CD14-positive monocyte (primary cell): ENCODE measurements at regions of chr11 and their contacts with region 1.

Region 1: GRCh38 chr11:59207988-59208451 is 4.7 kb downstream of the MPEG1 start:
- DNase-seq: peak in 2 of 3 donors; percentile 51 to 64
- H3K4me3 ChIP-seq: peak overlapping the region; percentile 70 to 99 (median 98)
- H3K4me3 Mint-ChIP-seq: peak overlapping the region; percentile 98 to 99
- H3K27ac ChIP-seq: peak overlapping the region; percentile 2 to 93
- H3K27ac Mint-ChIP-seq: peak overlapping the region; percentile 86 to 98 (median 97)
- H3K4me1 ChIP-seq: peaks cover 37 to 70% of the 10 kb centered on the region in 2 donors
- H3K4me1 Mint-ChIP-seq: peaks cover 51% of the 10 kb centered on the region
- H3K27me3 ChIP-seq: no peaks in the 10 kb centered on the region
- H3K27me3 Mint-ChIP-seq: no peaks in the 10 kb centered on the region
- CTCF ChIP-seq: peak; percentile 80

Region 2: DNA sequence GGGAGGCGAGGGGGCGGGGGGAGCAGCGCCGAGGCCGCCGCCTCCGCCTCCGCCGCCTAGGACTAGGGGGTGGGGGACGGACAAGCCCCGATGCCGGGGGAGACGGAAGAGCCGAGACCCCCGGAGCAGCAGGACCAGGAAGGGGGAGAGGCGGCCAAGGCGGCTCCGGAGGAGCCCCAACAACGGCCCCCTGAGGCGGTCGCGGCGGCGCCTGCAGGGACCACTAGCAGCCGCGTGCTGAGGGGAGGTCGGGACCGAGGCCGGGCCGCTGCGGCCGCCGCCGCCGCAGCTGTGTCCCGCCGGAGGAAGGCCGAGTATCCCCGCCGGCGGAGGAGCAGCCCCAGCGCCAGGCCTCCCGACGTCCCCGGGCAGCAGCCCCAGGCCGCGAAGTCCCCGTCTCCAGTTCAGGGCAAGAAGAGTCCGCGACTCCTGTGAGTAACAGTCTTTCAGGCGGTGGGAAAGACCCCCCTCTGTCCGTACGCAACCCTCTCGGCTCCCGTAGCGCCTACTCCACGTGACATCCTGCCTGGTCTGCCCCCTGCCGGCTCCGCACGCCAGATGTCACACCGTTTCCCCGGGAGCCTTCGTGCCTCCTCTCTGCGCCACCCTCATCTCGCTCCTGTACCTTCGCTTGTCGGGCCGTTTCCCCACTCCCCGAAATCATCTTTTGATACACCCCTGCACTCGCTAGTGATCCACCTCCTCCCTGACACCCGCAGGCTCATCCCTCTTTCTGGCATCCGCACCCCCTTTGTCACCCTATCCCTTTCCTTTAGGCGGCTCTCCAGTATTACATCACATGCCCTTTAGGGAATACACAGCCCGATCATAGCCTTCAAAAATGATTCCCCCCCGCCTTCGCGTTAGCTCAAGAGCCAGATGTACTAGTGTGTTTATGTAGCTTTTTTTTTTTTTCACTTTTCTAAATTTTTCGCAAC is 628.6 kb before region 1 on chr11:
- intact Hi-C with region 1: loop called in 1 of 2 experiments (anchors 5 kb)
- DNase-seq: peak; percentile 87 to 98 (median 91)
- H3K4me3 ChIP-seq: peak overlapping the region; percentile 68 to 89 (median 75)
- H3K4me3 Mint-ChIP-seq: peak overlapping the region; percentile 98 to 100
- H3K27ac ChIP-seq: peak overlapping the region; percentile 97 to 100
- H3K27ac Mint-ChIP-seq: peak overlapping the region; percentile 100
- H3K4me1 ChIP-seq: peaks cover 54 to 68% of the 10 kb centered on the region in 2 donors
- H3K4me1 Mint-ChIP-seq: peaks cover 62% of the 10 kb centered on the region
- H3K27me3 ChIP-seq: no peaks in the 10 kb centered on the region
- H3K27me3 Mint-ChIP-seq: peaks cover 0 to 2% (median 0%) of the 10 kb centered on the region in 3 donors
- CTCF ChIP-seq: peak; percentile 90

Region 3: DNA sequence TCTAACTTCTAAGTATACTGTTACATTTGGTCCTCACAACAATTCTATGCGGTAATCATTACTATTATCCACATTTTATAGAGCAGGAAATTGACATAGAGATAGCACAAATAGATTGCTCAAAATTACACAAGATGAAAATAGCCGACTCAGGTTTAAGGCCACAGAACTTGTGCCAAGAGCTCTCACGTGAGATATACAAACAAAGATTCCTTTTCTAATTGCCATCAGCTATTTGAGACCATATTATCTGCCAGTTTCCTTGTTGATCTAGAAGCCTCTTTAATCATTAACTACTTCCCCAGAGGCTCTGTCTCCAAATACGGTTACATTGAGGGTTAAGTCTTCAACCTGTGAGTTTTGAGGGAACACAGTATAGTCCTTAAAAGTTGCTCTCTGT is 182.9 kb before region 1 on chr11:
- intact Hi-C with region 1: no loop called
- DNase-seq: no peak
- H3K4me3 ChIP-seq: no peak overlapping the region
- H3K4me3 Mint-ChIP-seq: no peak overlapping the region
- H3K27ac ChIP-seq: no peak overlapping the region
- H3K27ac Mint-ChIP-seq: no peak overlapping the region
- H3K4me1 ChIP-seq: peaks cover 0 to 4% of the 10 kb centered on the region in 2 donors
- H3K4me1 Mint-ChIP-seq: peaks cover 4% of the 10 kb centered on the region
- H3K27me3 ChIP-seq: no peaks in the 10 kb centered on the region
- H3K27me3 Mint-ChIP-seq: peaks cover 0 to 3% (median 0%) of the 10 kb centered on the region in 3 donors
- CTCF ChIP-seq: no peak

Region 4: DNA sequence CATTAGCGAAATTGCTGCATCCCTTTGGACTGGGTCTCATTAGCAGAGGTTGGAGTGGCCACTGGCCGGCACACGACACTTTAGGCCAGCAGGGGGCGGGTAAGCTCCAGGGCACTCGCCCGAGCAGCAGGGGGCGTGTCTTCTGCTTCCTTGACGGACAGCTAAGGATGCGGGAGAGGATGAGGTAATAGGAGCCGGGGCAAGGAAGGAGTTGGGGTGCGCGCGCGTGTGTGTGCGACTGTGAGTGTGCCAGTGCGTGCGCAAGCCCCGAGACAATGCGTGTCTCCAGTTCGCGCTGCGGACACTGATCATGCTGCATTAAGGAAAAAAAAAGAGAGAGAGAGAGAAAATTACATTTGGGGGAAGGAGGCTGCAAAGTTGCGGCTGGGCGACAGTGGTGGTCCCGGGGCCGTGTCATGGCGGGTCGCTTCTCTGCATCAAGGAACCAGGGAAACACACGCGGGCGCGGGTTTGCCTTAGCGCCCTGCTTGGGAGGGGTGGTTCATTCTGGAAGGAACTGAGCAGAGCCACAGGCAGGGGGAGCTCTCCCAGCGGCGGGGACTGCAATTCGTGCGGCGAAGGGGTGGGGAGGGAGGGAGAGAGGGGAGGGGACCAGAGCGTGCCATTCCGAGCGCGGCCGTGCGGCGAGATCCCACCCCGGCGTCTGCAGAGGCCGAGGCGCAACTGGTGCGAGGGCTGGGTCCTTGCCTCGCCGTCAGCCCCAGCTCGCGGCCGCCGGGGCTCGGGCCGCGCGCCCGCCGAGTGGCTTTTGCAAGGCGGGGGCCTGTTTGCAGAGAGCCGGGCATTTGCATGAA is 36.3 kb before region 1 on chr11 and contains the start of gene DTX4:
- intact Hi-C with region 1: loop called (anchors 2 to 5 kb)
- DNase-seq: peak; percentile 87 to 96 (median 90)
- H3K4me3 ChIP-seq: peak within 1 kb of the TSS; percentile 65 to 82 (median 67)
- H3K4me3 Mint-ChIP-seq: peak within 1 kb of the TSS; percentile 90 to 97
- H3K27ac ChIP-seq: peak within 1 kb of the TSS; percentile 31 to 71
- H3K27ac Mint-ChIP-seq: peak within 1 kb of the TSS in 3 of 7 donors; percentile 21 to 66 (median 27)
- H3K4me1 ChIP-seq: peaks cover 14 to 17% of the 10 kb centered on the region in 2 donors
- H3K4me1 Mint-ChIP-seq: peaks cover 20% of the 10 kb centered on the region
- H3K27me3 ChIP-seq: peaks cover 0 to 9% of the 10 kb centered on the region in 2 donors
- H3K27me3 Mint-ChIP-seq: peaks cover 15 to 22% (median 20%) of the 10 kb centered on the region in 3 donors
- CTCF ChIP-seq: peak; percentile 92
- polyA plus RNA-seq, gene DTX4: 0.96 to 1.9 (median 1.1) TPM

Region 5: DNA sequence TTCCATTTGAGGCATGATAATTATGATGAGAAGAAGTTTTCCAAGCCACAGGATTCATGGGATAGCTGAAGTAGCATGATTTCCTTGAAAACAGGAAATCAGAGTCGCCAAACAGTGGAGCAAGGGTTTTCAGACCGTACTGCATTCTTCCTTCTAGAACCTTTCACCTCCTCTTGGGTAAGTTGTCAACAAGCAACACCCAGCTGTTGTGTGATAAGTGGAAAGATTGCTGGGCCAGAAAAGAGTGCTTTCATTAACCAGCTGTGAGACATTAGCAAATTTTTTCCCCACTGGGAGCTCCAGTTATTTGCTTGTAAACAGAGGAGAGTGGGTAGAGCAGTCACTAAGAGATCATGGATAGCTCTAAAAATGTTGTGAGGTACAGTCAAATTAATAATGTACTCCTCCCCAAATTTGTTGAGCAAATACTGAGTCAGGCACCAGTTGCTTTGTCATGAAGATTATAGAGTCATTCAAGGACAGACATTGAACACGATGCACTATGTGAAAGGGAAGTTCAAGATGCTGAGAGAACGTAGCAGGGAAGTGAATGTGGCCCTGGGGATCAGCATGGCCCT is 16.4 kb after region 1 on chr11:
- intact Hi-C with region 1: loop called in 1 of 2 experiments (anchors 2 kb)
- DNase-seq: peak; percentile 88 to 92 (median 92)
- H3K4me3 ChIP-seq: peak overlapping the region in 2 of 3 experiments; percentile 45 to 61
- H3K4me3 Mint-ChIP-seq: peak overlapping the region; percentile 74 to 76
- H3K27ac ChIP-seq: peak overlapping the region; percentile 93 to 98
- H3K27ac Mint-ChIP-seq: peak overlapping the region; percentile 96 to 99 (median 98)
- H3K4me1 ChIP-seq: peaks cover 69 to 73% of the 10 kb centered on the region in 2 donors
- H3K4me1 Mint-ChIP-seq: peaks cover 78% of the 10 kb centered on the region
- H3K27me3 ChIP-seq: no peaks in the 10 kb centered on the region
- H3K27me3 Mint-ChIP-seq: peaks cover 0 to 1% (median 0%) of the 10 kb centered on the region in 3 donors
- CTCF ChIP-seq: no peak

Region 6: GRCh38 chr11:59259867-59260475 is 52.0 kb after region 1 on chr11:
- intact Hi-C with region 1: loop called in 1 of 2 experiments (anchors 5 kb)
- DNase-seq: no peak
- H3K4me3 ChIP-seq: no peak overlapping the region
- H3K4me3 Mint-ChIP-seq: no peak overlapping the region
- H3K27ac ChIP-seq: no peak overlapping the region
- H3K27ac Mint-ChIP-seq: peak overlapping the region in 1 of 7 donors; percentile 25
- H3K4me1 ChIP-seq: peaks cover 32 to 51% of the 10 kb centered on the region in 2 donors
- H3K4me1 Mint-ChIP-seq: peaks cover 57% of the 10 kb centered on the region
- H3K27me3 ChIP-seq: no peaks in the 10 kb centered on the region
- H3K27me3 Mint-ChIP-seq: peaks cover 0 to 3% (median 2%) of the 10 kb centered on the region in 3 donors
- CTCF ChIP-seq: no peak

Region 7: DNA sequence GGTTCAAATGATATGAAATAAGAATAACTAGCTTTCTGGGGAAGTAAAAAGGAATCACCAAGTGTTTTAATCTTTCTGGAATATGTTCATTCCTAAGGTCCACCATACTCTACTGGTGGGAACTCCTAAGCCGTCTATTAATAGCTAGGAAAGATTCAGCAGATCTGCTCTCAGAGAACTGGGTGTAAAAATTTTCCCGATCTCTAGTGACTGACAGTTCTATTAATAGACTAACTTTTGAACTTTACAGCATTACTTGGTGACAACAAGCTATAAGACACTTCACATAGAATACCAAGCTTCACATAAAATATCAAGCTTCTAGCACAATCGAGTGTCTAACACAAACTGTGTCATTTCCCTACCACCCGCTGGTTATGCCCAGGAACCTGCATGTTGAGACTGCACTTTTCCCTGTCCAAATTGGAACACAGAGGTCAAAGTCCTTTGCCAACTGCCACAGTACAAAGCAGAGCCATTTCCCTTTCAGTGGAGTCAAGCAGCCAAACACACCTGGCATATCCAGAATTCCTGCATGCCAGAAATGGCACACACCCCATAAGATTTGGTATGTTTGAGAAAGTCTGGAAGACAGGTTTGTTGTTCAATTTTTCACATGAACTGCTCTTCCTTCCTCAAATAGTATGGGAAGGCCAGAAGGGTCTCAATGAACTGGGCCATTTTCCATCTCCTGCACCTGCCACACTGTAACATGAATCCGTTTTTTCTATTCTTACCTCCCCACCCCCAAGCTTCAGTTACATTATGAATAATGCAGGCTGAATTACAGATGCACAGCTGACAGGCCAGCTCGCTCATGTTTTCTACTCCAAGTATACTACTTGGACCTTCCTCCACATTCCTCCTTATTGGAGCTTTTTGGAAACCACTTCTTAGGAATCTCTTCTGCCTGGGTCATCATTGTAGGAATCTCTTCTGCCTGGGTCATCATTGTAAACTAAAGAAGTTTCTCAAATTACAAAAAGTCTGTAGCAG is 403.8 kb after region 1 on chr11:
- intact Hi-C with region 1: no loop called
- DNase-seq: no peak
- H3K4me3 ChIP-seq: no peak overlapping the region
- H3K4me3 Mint-ChIP-seq: no peak overlapping the region
- H3K27ac ChIP-seq: no peak overlapping the region
- H3K27ac Mint-ChIP-seq: peak overlapping the region in 3 of 7 donors; percentile 21 to 63 (median 25)
- H3K4me1 ChIP-seq: peaks cover 22 to 32% of the 10 kb centered on the region in 2 donors
- H3K4me1 Mint-ChIP-seq: peaks cover 36% of the 10 kb centered on the region
- H3K27me3 ChIP-seq: no peaks in the 10 kb centered on the region
- H3K27me3 Mint-ChIP-seq: peaks cover 0 to 3% (median 2%) of the 10 kb centered on the region in 3 donors
- CTCF ChIP-seq: no peak